AG04450 (cell line): ENCODE measurements at regions of chr10 and their contacts with region 1.

Region 1: DNA sequence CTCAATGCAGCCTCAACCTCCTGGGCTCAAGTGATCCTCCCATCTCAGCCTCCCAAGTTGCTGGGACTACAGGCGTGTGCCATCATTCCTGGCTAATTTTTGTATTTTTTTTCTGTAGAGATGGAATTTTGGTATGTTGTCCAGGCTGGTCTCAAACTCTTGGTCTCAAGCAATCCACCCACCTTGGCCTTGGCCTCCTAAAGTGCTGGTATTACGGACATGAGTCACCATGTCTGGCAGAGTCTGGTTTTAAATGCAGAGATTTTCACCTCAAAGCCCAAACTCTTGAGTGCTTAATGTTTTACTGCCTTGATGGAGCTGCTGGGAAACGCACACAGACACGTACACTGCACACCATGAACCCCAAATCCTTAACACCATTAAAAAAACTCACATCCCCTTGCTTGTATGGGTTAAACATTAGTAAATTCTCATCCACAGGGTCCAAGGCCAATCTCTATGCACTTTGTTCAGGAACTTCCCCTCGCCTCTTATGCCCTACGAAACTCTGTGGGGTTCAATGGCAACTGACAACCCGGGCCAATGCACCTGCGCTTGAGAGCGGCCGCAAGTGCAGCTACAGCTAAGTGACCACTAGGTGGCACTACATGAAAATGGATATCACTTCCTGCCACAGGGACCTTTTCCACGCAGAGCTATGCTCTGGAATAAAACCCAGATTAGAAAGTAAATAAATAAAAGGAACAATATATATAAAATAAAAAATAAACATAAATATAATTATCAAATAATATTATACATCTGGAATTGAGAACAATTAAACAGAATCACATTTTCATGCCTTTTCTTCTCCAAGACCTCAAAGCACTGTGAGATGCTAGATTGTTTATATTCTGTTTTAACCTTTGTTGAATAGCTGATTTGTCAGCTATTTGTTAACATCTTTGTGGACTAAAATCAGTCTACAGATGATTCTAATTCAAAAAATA is 66.9 kb upstream of the AFAP1L2 start:
- DNase-seq: peak; percentile 46
- H3K4me3 ChIP-seq: no peak overlapping the region
- H3K27ac ChIP-seq: no peak overlapping the region
- H3K27me3 ChIP-seq: peaks cover 2% of the 10 kb centered on the region
- CTCF ChIP-seq: peak; percentile 88

Region 2: DNA sequence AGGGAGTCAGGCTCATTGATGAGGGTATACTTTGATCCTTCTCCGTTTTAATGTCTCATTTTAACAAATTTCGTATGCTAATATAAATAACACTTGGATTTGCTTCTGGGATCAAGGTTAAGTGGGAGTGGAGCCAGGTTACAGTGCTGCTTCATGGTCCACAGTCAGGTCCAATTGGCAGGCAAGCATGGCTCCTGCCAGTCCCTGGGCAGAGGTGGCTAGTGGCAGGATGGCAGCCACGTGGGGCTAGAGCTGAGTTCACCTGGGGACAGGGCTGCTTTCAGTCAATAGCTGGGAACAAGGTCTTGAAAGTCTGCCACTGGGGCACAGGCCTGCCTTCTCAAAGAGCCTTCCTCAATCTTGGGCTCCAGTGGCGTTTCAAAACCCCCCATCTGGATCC is 248.2 kb before region 1 on chr10:
- CTCF ChIA-PET with region 1: no interaction called
- POLR2A ChIA-PET with region 1: no interaction called
- DNase-seq: no peak
- H3K4me3 ChIP-seq: no peak overlapping the region
- H3K27ac ChIP-seq: no peak overlapping the region
- H3K27me3 ChIP-seq: peaks cover 6% of the 10 kb centered on the region
- CTCF ChIP-seq: no peak

Region 3: GRCh38 chr10:114453576-114453975 is 17.7 kb before region 1 on chr10:
- CTCF ChIA-PET with region 1: interaction called, 20 read pairs
- POLR2A ChIA-PET with region 1: no interaction called
- DNase-seq: no peak
- H3K4me3 ChIP-seq: no peak overlapping the region
- H3K27ac ChIP-seq: no peak overlapping the region
- H3K27me3 ChIP-seq: no peaks in the 10 kb centered on the region
- CTCF ChIP-seq: no peak

Region 4: GRCh38 chr10:114486938-114487814 is 15.9 kb after region 1 on chr10:
- CTCF ChIA-PET with region 1: interaction called, 29 read pairs
- POLR2A ChIA-PET with region 1: no interaction called
- DNase-seq: peak; percentile 30
- H3K4me3 ChIP-seq: no peak overlapping the region
- H3K27ac ChIP-seq: no peak overlapping the region
- H3K27me3 ChIP-seq: peaks cover 2% of the 10 kb centered on the region
- CTCF ChIP-seq: no peak

Region 5: GRCh38 chr10:114526504-114527238 is 55.4 kb after region 1 on chr10:
- CTCF ChIA-PET with region 1: interaction called, 10 read pairs
- POLR2A ChIA-PET with region 1: no interaction called
- DNase-seq: no peak
- H3K4me3 ChIP-seq: peak overlapping the region; percentile 29
- H3K27ac ChIP-seq: no peak overlapping the region
- H3K27me3 ChIP-seq: peaks cover 17% of the 10 kb centered on the region
- CTCF ChIP-seq: no peak

Region 6: GRCh38 chr10:114550756-114551635 is 79.8 kb after region 1 on chr10:
- CTCF ChIA-PET with region 1: interaction called, 92 read pairs
- POLR2A ChIA-PET with region 1: interaction called, 3 read pairs
- DNase-seq: no peak
- H3K4me3 ChIP-seq: peak overlapping the region; percentile 43
- H3K27ac ChIP-seq: no peak overlapping the region
- H3K27me3 ChIP-seq: peaks cover 5% of the 10 kb centered on the region
- CTCF ChIP-seq: peak; percentile 39

Region 7: GRCh38 chr10:114821293-114821914 is 350.2 kb after region 1 on chr10 and contains the start of gene FHIP2A:
- CTCF ChIA-PET with region 1: interaction called, 11 read pairs
- POLR2A ChIA-PET with region 1: no interaction called
- DNase-seq: no peak
- H3K4me3 ChIP-seq: peak within 1 kb of the TSS; percentile 79
- H3K27ac ChIP-seq: peak within 1 kb of the TSS; percentile 99
- H3K27me3 ChIP-seq: no peaks in the 10 kb centered on the region
- CTCF ChIP-seq: peak; percentile 37; the same call in 1 of the 2 replicates
- polyA plus RNA-seq, gene FHIP2A: 19.2 and 27.3 TPM in 2 replicates

Region 8: DNA sequence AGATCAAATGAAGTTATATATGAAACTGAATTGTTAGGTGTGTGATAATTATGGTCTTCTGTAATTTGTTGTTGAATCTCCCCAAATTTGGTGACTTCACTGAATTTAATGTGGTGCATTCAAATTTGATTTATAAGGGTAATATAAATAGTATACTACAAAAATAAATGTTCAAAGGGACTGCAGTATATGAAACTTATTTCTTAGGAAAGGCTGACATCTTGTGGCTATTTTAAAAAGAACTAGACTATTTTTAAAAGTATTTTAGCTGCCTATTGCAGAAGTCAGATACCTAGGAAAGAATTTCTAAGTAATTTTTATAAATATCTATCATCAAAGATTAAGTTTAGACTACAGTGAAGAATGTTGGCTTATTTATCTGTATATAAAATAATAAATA is 658.5 kb after region 1 on chr10:
- CTCF ChIA-PET with region 1: interaction called, 21 read pairs
- POLR2A ChIA-PET with region 1: no interaction called
- DNase-seq: peak; percentile 0
- H3K4me3 ChIP-seq: no peak overlapping the region
- H3K27ac ChIP-seq: no peak overlapping the region
- H3K27me3 ChIP-seq: no peaks in the 10 kb centered on the region
- CTCF ChIP-seq: peak; percentile 18; the same call in 1 of the 2 replicates